IMR-90 (cell line): ENCODE measurements at regions of chr4 and their contacts with region 1.

Region 1: GRCh38 chr4:169823685-169824084 is 65.9 kb upstream of the HPF1 start:
- DNase-seq: peak; percentile 60
- ATAC-seq: peak; percentile 69; the same call in 1 of the 2 replicates
- H3K4me3 ChIP-seq: no peak overlapping the region
- H3K27ac ChIP-seq: no peak overlapping the region
- H3K4me1 ChIP-seq: no peaks in the 10 kb centered on the region
- H3K27me3 ChIP-seq: no peaks in the 10 kb centered on the region
- CTCF ChIP-seq: no peak
- POLR2A ChIP-seq: no peak
- RAD21 ChIP-seq: no peak

Region 2: GRCh38 chr4:169854090-169854489 is 30.4 kb after region 1 on chr4:
- CTCF ChIA-PET with region 1: no interaction called
- POLR2A ChIA-PET with region 1: no interaction called
- dilution Hi-C with region 1: no loop called
- in situ Hi-C with region 1: no loop called
- intact Hi-C with region 1: no loop called
- DNase-seq: no peak
- ATAC-seq: no peak
- H3K4me3 ChIP-seq: no peak overlapping the region
- H3K27ac ChIP-seq: no peak overlapping the region
- H3K4me1 ChIP-seq: no peaks in the 10 kb centered on the region
- H3K27me3 ChIP-seq: no peaks in the 10 kb centered on the region
- CTCF ChIP-seq: no peak
- POLR2A ChIP-seq: no peak
- RAD21 ChIP-seq: no peak

Region 3: DNA sequence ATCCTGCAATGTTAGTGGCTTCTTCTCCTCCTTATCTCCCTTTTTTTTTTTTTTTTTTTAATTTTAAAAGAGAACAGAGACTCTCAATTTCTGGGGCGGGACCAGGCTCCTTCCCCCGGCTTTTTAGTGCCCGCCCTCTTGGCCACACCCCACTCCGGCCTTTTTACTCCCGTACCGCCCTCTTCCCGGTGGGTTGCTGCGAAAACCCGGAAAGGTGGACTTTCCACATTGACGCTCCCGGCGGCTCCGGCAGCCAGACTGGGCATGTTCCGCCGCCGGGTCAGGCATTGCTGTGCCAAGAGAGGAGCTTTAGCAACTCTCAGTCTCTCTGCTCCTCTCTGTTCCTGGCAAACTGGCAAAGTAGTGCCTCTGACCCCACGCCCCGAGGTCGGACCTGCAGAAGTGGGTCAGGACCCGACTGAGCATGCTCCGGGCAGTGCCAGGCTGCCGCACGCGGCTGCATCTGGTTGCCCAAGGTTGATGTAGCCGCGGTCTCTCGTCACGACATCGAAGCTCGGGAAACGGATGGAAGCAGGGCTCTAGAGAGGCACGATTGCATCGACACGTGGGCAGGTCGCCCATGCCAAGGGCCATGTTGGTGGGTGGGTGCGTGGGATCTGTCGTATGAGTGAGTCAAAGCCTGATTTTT is 203.6 kb after region 1 on chr4:
- CTCF ChIA-PET with region 1: no interaction called
- POLR2A ChIA-PET with region 1: no interaction called
- dilution Hi-C with region 1: no loop called
- in situ Hi-C with region 1: no loop called
- intact Hi-C with region 1: loop called (anchors 5 kb)
- DNase-seq: peak; percentile 95
- ATAC-seq: peak; percentile 82
- H3K4me3 ChIP-seq: peak overlapping the region; percentile 68
- H3K27ac ChIP-seq: no peak overlapping the region
- H3K4me1 ChIP-seq: 0 out of 2 replicates have a peak, but pooled peaks cover 2% of the 10 kb centered on the region
- H3K27me3 ChIP-seq: peaks cover 22% of the 10 kb centered on the region
- CTCF ChIP-seq: no peak
- POLR2A ChIP-seq: no peak
- RAD21 ChIP-seq: no peak